Ascending aorta (tissue), 2 donors: ENCODE measurements at regions of chr1 and their contacts with region 1.

Region 1: DNA sequence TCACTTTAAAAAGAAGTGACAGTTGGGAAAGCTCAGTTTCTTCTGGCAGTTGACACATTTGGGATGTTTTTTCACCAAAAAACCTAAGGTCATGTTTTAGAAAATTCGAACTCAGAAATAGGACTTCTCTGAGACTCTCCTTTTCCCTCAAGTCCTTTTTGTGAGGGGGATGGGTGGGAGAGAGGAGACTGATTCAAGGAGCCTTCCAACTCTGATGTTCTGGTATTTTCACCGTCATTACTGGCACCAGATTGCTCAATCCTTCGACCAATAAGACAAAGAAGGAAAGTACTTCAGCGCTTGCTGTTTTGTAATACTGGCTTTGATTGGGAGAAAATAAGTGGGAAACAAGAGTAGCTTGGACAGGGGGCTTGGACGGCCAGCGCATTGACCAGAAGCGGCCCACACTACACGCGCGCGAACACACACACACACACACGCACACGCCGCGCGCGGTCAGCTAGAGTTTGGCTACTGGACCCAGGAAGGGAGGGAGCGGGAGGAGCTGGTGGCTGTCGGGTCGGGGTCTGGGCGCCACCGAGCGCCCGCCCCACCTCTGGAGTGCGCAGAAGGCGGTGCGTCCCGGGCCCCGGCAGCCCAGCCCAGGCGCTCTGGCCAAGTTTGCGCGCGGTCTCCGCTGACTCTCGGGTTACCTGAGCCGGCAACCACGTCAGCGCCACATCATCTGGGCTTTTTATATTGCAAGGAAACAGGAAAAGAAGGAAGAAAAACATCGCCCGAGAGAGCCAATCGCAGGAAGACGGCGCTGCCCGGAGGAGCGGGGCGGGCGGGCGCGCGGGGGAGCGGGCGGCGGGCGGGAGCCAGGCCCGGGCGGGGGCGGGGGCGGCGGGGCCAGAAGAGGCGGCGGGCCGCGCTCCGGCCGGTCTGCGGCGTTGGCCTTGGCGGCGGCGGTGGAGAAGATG is at the start of gene KCNK1:
- DNase-seq: peak; percentile 16 to 83
- H3K4me3 ChIP-seq: peak within 1 kb of the TSS; percentile 73 to 85
- H3K27ac ChIP-seq: peak within 1 kb of the TSS; percentile 70 to 72
- H3K4me1 ChIP-seq: no peaks in the 10 kb centered on the region
- H3K27me3 ChIP-seq: no peaks in the 10 kb centered on the region
- CTCF ChIP-seq: no peak
- total RNA-seq, gene KCNK1: 1.4 TPM

Region 2: GRCh38 chr1:233627376-233627775 is 13.9 kb after region 1 on chr1:
- intact Hi-C with region 1: no loop called
- DNase-seq: no peak
- H3K4me3 ChIP-seq: no peak overlapping the region
- H3K27ac ChIP-seq: no peak overlapping the region
- H3K4me1 ChIP-seq: no peaks in the 10 kb centered on the region
- H3K27me3 ChIP-seq: no peaks in the 10 kb centered on the region
- CTCF ChIP-seq: no peak

Region 3: DNA sequence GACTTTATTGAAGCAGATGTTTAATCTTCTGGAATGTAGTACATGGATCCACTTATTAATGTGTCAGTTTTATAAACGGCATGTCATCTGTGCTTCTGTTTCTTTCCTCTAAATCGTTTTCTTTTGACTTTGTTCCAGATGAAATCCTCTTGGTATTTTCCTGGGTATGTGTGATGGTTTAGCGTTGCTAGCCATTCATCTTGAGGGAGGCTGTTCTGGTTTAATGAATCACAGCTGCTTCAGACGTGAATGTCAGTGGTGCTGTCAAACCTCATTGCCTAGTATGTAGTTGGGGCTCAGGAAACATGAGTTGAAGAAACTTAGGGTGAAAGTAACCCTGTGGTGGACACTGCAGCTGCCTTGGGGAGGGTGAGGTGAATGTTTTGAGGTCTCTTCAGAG is 33.6 kb after region 1 on chr1:
- intact Hi-C with region 1: no loop called
- DNase-seq: no peak
- H3K4me3 ChIP-seq: no peak overlapping the region
- H3K27ac ChIP-seq: no peak overlapping the region
- H3K4me1 ChIP-seq: no peaks in the 10 kb centered on the region
- H3K27me3 ChIP-seq: no peaks in the 10 kb centered on the region
- CTCF ChIP-seq: no peak

Region 4: GRCh38 chr1:233662575-233663304 is 49.2 kb after region 1 on chr1:
- intact Hi-C with region 1: loop called (anchors 2 kb)
- DNase-seq: no peak
- H3K4me3 ChIP-seq: no peak overlapping the region
- H3K27ac ChIP-seq: no peak overlapping the region
- H3K4me1 ChIP-seq: peaks cover 0 to 14% of the 10 kb centered on the region in 2 donors
- H3K27me3 ChIP-seq: no peaks in the 10 kb centered on the region
- CTCF ChIP-seq: no peak

Region 5: GRCh38 chr1:233721141-233721547 is 107.6 kb after region 1 on chr1:
- intact Hi-C with region 1: no loop called
- DNase-seq: no peak
- H3K4me3 ChIP-seq: no peak overlapping the region
- H3K27ac ChIP-seq: no peak overlapping the region
- H3K4me1 ChIP-seq: no peaks in the 10 kb centered on the region
- H3K27me3 ChIP-seq: no peaks in the 10 kb centered on the region
- CTCF ChIP-seq: no peak